ENCODE measurements at regions of chr5 and their contacts with region 1.

Region 1: DNA sequence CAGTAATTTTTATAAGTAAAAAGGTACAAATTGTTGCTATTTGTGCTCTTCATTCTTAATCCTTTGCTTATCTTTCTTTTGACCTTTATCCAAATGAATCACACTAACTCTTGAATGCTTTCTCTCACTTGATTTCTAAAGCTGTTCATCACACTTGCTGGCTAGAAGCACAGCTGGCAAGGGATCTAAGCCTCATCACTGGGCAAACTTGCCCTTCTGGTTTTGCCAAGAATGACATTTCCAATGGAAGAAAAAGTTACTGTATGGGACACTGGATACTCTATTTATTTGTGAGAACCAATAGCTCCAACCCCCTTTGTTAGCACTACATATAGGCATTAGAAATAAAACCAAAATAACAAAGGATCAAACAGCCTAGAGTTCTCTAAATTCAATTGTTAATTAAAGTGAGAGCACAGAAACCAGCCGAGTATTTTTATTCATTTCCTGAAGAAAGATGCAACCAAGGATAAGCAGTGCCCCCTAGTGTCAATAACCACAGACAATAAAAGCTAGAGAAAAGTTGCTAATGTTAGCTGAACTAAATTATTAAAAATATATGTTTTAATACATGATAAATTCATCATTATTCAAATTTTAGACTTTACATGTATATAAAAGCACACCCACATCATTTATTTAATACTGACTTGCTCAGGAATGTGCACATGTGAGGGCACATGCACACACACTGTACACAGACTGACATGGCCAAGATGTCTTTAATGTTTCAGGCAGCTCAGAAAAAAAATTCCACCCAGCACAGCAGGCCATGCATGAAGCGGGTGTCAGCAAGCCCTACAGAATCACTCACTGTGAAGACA is 59.8 kb upstream of the POU5F2 start:
- DNase-seq: peak; percentile 66
- ATAC-seq: peak; percentile 89
- H3K4me3 ChIP-seq: peak overlapping the region; percentile 4 to 9; a peak in 1 of 4 replicates
- H3K27ac ChIP-seq: peak overlapping the region; percentile 56
- H3K4me1 ChIP-seq: peaks cover 14 to 24% of the 10 kb centered on the region in 2 experiments
- H3K27me3 ChIP-seq: no peaks in the 10 kb centered on the region
- CTCF ChIP-seq: peak; percentile 59 to 72 (median 66); a peak in 5 of 6 replicates
- POLR2A ChIP-seq: no peak
- RAD21 ChIP-seq: peak; percentile 88

Region 2: GRCh38 chr5:92309336-92309991 is 1491.7 kb before region 1 on chr5:
- CTCF ChIA-PET with region 1: interaction called, 4 read pairs
- POLR2A ChIA-PET with region 1: no interaction called
- RAD21 ChIA-PET with region 1: no interaction called
- intact Hi-C with region 1: loop called (anchors 10 kb)
- DNase-seq: peak; percentile 13
- ATAC-seq: peak; percentile 62
- H3K4me3 ChIP-seq: no peak overlapping the region
- H3K27ac ChIP-seq: peak overlapping the region; percentile 29; the same call in 1 of the 2 replicates
- H3K4me1 ChIP-seq: peaks cover 0 to 13% of the 10 kb centered on the region in 2 experiments; a peak in 1 of 4 replicates
- H3K27me3 ChIP-seq: no peaks in the 10 kb centered on the region
- CTCF ChIP-seq: peak; percentile 42 to 68 (median 47); a peak in 5 of 6 replicates
- POLR2A ChIP-seq: no peak
- RAD21 ChIP-seq: peak; percentile 77

Region 3: DNA sequence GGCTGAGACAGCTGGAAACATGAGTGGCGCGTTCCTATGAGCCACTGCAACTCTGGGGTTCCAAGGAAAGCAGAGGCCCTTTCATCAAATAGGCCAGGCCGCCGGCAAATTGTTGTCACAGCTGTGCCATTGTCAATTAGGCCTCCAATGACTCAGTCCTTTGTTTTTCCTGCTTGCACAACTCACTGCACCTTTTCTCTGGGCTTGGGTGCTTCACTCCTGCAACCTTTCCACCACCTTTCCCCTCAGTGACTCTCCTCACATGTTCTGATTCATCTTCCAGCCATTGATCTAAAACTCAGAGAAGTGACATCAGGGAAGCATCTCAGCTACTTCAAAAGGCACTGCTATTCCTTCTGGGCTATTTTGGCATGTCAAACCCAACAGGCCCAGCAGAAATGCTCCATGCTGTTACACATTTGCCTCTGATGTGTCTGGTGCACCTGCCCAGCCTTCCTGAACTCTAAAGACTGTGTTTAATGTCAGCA is 873.9 kb before region 1 on chr5:
- CTCF ChIA-PET with region 1: no interaction called
- POLR2A ChIA-PET with region 1: no interaction called
- RAD21 ChIA-PET with region 1: no interaction called
- intact Hi-C with region 1: loop called (anchors 10 kb)
- DNase-seq: peak; percentile 72
- ATAC-seq: peak; percentile 84
- H3K4me3 ChIP-seq: no peak overlapping the region
- H3K27ac ChIP-seq: peak overlapping the region; percentile 64
- H3K4me1 ChIP-seq: peaks cover 12 to 25% of the 10 kb centered on the region in 2 experiments
- H3K27me3 ChIP-seq: no peaks in the 10 kb centered on the region
- CTCF ChIP-seq: no peak
- POLR2A ChIP-seq: no peak
- RAD21 ChIP-seq: 0 out of 2 replicates have a peak, but pooled peaks have one; percentile 9

Region 4: DNA sequence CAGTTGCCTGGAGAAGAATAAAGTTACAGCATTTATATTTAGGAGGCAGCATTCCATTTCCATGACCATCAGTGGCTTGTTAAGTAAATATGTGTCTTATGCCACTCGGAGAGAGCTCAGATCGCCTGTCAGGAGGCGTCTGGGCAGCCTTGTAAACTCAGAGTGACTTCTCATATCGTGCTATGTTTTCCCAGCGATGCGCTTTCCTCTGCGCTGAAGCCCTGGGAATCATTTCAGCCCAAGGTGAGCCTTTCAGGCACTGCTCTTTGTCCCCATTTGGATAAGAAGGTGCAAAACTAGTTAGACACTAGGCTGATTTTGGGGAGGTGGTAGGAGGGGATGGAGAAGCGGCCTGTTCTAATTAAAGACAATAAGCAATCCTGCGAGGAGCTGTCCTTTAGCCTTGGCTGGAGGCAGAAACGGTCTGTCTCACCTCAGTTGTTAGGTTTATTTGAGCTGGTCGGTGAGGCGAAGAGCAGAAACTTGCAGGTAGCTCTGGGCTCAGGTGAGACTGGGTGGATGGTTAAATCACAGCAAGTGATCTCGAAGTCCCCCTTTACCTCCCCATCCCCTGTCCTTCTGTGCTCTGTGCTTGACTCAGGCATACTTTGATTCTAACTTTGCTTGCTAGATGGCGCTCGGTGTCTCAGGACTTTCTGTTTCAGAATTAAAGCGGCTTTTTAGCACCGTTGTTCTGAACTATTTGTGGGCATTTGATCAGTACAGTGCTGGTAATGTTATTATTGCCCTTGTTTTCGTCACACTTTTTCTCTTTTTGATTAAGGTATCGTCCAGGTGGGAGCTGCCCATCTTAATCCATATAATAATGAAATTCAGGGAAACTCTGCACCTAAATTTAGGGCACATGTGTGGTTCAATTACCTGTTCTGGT is 193.6 kb before region 1 on chr5:
- CTCF ChIA-PET with region 1: interaction called, 18 read pairs
- POLR2A ChIA-PET with region 1: interaction called, 3 read pairs
- RAD21 ChIA-PET with region 1: interaction called, 6 to 8 read pairs
- intact Hi-C with region 1: loop called (anchors 5 kb)
- DNase-seq: no peak
- ATAC-seq: peak; percentile 83
- H3K4me3 ChIP-seq: no peak overlapping the region
- H3K27ac ChIP-seq: no peak overlapping the region
- H3K4me1 ChIP-seq: peaks cover 14 to 18% of the 10 kb centered on the region in 2 experiments; a peak in 2 of 4 replicates
- H3K27me3 ChIP-seq: peaks cover 54% of the 10 kb centered on the region
- CTCF ChIP-seq: peak; percentile 55 to 78 (median 67)
- POLR2A ChIP-seq: no peak
- RAD21 ChIP-seq: peak; percentile 77

Region 5: GRCh38 chr5:93620487-93621326 is 180.5 kb before region 1 on chr5:
- CTCF ChIA-PET with region 1: interaction called, 10 read pairs
- POLR2A ChIA-PET with region 1: no interaction called
- RAD21 ChIA-PET with region 1: interaction called in 1 of 2 experiments, 3 read pairs
- intact Hi-C with region 1: no loop called
- DNase-seq: peak; percentile 34
- ATAC-seq: peak; percentile 98
- H3K4me3 ChIP-seq: peak overlapping the region; percentile 45 to 67
- H3K27ac ChIP-seq: no peak overlapping the region; the same call in 1 of the 2 replicates
- H3K4me1 ChIP-seq: peaks cover 0 to 12% of the 10 kb centered on the region in 2 experiments; a peak in 3 of 4 replicates
- H3K27me3 ChIP-seq: no peaks in the 10 kb centered on the region
- CTCF ChIP-seq: peak in 1 of 3 experiments; percentile 18; a peak in 1 of 6 replicates
- POLR2A ChIP-seq: no peak
- RAD21 ChIP-seq: peak; percentile 50

Region 6: GRCh38 chr5:93789173-93790070 is 11.8 kb before region 1 on chr5:
- CTCF ChIA-PET with region 1: interaction called, 16 read pairs
- POLR2A ChIA-PET with region 1: no interaction called
- RAD21 ChIA-PET with region 1: no interaction called
- intact Hi-C with region 1: no loop called
- DNase-seq: no peak
- ATAC-seq: peak; percentile 70
- H3K4me3 ChIP-seq: no peak overlapping the region
- H3K27ac ChIP-seq: peak overlapping the region; percentile 23; the same call in 1 of the 2 replicates
- H3K4me1 ChIP-seq: peaks cover 11 to 16% of the 10 kb centered on the region in 2 experiments
- H3K27me3 ChIP-seq: no peaks in the 10 kb centered on the region
- CTCF ChIP-seq: peak in 2 of 3 experiments; percentile 11 to 21; a peak in 3 of 6 replicates
- POLR2A ChIP-seq: no peak
- RAD21 ChIP-seq: peak; percentile 33

Region 7: GRCh38 chr5:94849821-94850736 is 1048.9 kb after region 1 on chr5:
- CTCF ChIA-PET with region 1: interaction called, 5 read pairs
- POLR2A ChIA-PET with region 1: no interaction called
- RAD21 ChIA-PET with region 1: interaction called in 1 of 2 experiments, 3 read pairs
- intact Hi-C with region 1: loop called (anchors 10 kb)
- DNase-seq: peak; percentile 59
- ATAC-seq: peak; percentile 96
- H3K4me3 ChIP-seq: peak overlapping the region in 1 of 2 experiments; percentile 18; a peak in 2 of 4 replicates
- H3K27ac ChIP-seq: no peak overlapping the region
- H3K4me1 ChIP-seq: 0 out of 4 replicates have a peak, but pooled peaks cover 0 to 4% of the 10 kb centered on the region in 2 experiments
- H3K27me3 ChIP-seq: no peaks in the 10 kb centered on the region
- CTCF ChIP-seq: peak; percentile 58 to 85 (median 69); a peak in 5 of 6 replicates
- POLR2A ChIP-seq: no peak
- RAD21 ChIP-seq: peak; percentile 83

Measured in HCT116 (cell line).